MCF 10A (cell line): ENCODE measurements at regions of chr5 and their contacts with region 1.

Region 1: DNA sequence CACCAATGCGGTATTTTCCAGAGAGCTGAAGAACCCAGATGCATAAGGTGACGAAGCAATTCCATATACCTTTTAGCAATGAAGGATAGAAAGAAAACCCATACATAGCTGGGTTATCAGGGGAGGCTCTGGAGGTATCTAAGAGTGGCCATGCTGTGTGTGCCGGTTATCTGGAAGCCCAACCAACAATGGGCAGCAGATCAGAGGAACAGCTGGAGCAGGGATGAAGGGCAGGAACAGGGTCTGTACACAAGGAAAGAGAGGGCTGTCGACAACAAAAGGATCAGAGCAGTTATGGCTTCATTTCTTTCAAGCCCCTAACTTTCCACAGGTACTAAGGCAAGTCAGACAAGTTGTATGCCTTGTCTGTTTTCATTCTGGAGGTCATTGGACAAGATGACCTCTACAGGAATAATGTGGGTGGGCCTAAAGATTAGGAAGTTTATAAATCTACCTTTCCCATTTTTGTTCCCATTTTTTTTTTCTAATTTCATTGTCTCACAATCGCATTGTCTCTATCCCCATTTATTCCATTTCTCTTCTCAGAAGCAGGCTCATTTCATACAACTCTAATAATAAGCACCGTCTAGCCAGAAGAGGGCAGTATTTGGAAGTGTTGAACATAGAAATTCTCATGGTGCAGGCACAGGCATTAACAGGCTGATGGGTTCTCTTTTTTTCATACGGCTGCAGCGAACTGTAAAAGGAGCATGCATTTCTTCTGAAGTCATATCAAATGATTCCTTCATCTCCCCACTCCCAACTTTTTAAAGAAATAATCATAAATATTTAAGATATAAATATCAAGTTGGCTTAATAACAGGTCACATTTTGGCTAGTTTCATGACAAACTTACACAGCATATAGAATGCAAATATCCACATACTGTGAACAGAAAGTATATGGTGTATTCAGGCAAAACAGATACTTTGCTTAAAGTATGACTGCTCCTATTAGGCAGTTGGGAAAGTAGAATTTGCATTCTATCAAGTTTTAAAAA is 63.5 kb downstream of the ZNF474 start:
- DNase-seq: peak; percentile 89
- H3K4me3 Mint-ChIP-seq: no peak overlapping the region
- H3K27ac Mint-ChIP-seq: no peak overlapping the region
- H3K4me1 Mint-ChIP-seq: peaks cover 5% of the 10 kb centered on the region
- H3K27me3 Mint-ChIP-seq: no peaks in the 10 kb centered on the region
- CTCF ChIP-seq: peak; percentile 77

Region 2: GRCh38 chr5:121430538-121430937 is 762.3 kb before region 1 on chr5:
- CTCF ChIA-PET with region 1: no interaction called
- POLR2A ChIA-PET with region 1: no interaction called
- intact Hi-C with region 1: no loop called
- DNase-seq: peak; percentile 19
- H3K4me3 Mint-ChIP-seq: no peak overlapping the region
- H3K27ac Mint-ChIP-seq: no peak overlapping the region
- H3K4me1 Mint-ChIP-seq: no peaks in the 10 kb centered on the region
- H3K27me3 Mint-ChIP-seq: no peaks in the 10 kb centered on the region
- CTCF ChIP-seq: no peak

Region 3: GRCh38 chr5:121841892-121842291 is 350.9 kb before region 1 on chr5:
- CTCF ChIA-PET with region 1: no interaction called
- POLR2A ChIA-PET with region 1: no interaction called
- intact Hi-C with region 1: no loop called
- DNase-seq: no peak
- H3K4me3 Mint-ChIP-seq: no peak overlapping the region
- H3K27ac Mint-ChIP-seq: no peak overlapping the region
- H3K4me1 Mint-ChIP-seq: no peaks in the 10 kb centered on the region
- H3K27me3 Mint-ChIP-seq: no peaks in the 10 kb centered on the region
- CTCF ChIP-seq: no peak

Region 4: GRCh38 chr5:122163121-122164069 is 29.4 kb before region 1 on chr5:
- CTCF ChIA-PET with region 1: interaction called, 29 read pairs
- POLR2A ChIA-PET with region 1: interaction called, 5 read pairs
- intact Hi-C with region 1: no loop called
- DNase-seq: peak; percentile 92
- H3K4me3 Mint-ChIP-seq: peak overlapping the region; percentile 22
- H3K27ac Mint-ChIP-seq: peak overlapping the region; percentile 81
- H3K4me1 Mint-ChIP-seq: peaks cover 23% of the 10 kb centered on the region
- H3K27me3 Mint-ChIP-seq: no peaks in the 10 kb centered on the region
- CTCF ChIP-seq: no peak

Region 5: DNA sequence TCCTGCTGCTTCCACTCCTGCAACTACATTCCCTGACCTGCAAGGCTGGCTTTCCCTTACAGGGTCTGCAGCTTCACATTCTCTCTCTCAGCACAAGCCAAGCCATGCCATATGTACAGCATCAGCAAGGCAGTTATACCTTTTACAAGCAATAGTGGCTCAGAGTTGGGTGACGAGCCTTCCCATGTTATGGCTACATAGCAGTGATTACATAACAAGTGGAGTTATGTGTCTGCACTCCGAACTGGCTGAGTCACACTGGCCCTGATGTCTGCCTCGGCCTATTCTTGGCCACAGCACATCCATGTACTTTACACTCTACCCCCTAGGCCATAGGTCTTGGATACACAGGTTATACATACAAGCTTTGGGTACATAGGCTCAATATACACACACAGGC is 67.2 kb after region 1 on chr5:
- CTCF ChIA-PET with region 1: interaction called, 32 read pairs
- POLR2A ChIA-PET with region 1: no interaction called
- intact Hi-C with region 1: no loop called
- DNase-seq: peak; percentile 94
- H3K4me3 Mint-ChIP-seq: no peak overlapping the region
- H3K27ac Mint-ChIP-seq: no peak overlapping the region
- H3K4me1 Mint-ChIP-seq: peaks cover 30% of the 10 kb centered on the region
- H3K27me3 Mint-ChIP-seq: no peaks in the 10 kb centered on the region
- CTCF ChIP-seq: no peak

Region 6: GRCh38 chr5:122354293-122354692 is 161.5 kb after region 1 on chr5:
- CTCF ChIA-PET with region 1: interaction called, 11 read pairs
- POLR2A ChIA-PET with region 1: interaction called, 3 read pairs
- intact Hi-C with region 1: no loop called
- DNase-seq: no peak
- H3K4me3 Mint-ChIP-seq: no peak overlapping the region
- H3K27ac Mint-ChIP-seq: no peak overlapping the region
- H3K4me1 Mint-ChIP-seq: peaks cover 9% of the 10 kb centered on the region
- H3K27me3 Mint-ChIP-seq: no peaks in the 10 kb centered on the region
- CTCF ChIP-seq: no peak

Region 7: DNA sequence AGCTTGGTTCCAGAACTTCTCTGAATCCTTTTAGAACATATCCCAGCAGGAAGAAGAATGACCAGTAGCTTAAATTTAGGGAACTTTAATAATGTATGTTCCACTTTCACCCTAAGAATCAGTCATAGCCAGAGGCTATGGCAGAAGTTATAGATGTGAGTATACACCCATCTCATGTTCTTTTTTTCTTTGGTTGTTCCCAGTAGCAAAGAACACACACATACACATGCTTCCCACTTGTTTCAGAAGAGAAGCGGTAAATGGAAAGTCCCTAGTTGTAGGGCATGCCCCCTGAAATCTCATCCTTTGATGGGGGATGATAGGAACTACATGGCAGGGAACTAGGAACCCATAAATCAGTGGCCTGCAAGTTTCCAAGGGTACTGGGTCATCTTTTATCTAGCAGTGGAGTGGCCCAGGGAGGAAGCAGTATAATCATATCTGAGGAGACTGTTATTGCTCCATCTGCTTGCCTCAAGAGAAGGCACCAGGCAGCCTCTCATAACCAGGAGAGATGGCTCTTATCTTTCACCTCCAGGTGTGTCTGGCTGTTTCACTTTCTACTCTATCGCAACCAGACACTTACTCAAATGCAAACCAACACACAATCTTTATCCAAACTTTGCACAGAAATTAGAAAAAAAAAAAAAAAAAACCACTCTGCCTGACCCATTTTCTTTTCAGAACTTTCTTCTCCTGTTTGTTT is 228.7 kb after region 1 on chr5:
- CTCF ChIA-PET with region 1: interaction called, 402 read pairs
- POLR2A ChIA-PET with region 1: interaction called, 6 read pairs
- intact Hi-C with region 1: no loop called
- DNase-seq: no peak
- H3K4me3 Mint-ChIP-seq: no peak overlapping the region
- H3K27ac Mint-ChIP-seq: no peak overlapping the region
- H3K4me1 Mint-ChIP-seq: no peaks in the 10 kb centered on the region
- H3K27me3 Mint-ChIP-seq: no peaks in the 10 kb centered on the region
- CTCF ChIP-seq: no peak

Region 8: DNA sequence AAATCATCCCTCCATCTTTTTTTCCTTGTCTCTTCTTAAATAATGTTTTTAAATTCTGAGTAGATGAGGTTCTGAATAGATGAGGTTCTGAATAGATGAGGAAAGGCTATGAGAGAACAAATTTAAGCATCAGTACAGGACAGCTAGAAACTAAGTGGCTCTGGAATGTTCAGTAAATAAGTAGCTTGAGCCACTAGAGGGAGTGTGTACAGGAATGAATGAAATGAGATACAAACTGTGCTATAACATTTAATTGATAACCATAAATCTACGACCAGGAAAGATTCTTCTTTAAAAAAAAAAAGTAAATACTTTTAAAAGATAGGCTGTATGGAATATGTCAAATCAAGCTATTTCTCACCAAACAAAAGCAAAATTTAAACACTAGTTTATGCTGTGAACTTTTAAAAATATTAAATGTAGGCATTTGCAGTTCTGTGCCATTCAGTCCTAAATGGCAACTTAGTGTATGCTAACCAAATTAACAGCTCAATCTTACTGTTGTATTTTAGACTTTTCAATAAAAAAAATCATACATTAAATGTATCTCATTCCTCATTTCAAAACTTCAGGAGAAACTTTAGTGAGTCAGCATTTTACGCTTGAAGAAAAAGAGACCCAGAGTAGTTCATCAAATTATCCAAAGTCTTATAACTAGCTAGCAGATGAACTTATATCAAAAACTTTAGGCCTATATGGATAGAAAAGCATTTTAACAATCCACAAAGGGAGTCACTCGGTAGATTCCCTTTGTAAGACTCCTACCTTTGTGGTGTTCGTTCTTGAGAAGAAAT is 511.6 kb after region 1 on chr5:
- CTCF ChIA-PET with region 1: interaction called, 10 read pairs
- POLR2A ChIA-PET with region 1: no interaction called
- intact Hi-C with region 1: no loop called
- DNase-seq: peak; percentile 69
- H3K4me3 Mint-ChIP-seq: no peak overlapping the region
- H3K27ac Mint-ChIP-seq: no peak overlapping the region
- H3K4me1 Mint-ChIP-seq: no peaks in the 10 kb centered on the region
- H3K27me3 Mint-ChIP-seq: no peaks in the 10 kb centered on the region
- CTCF ChIP-seq: peak; percentile 61